Activated CD4-positive, alpha-beta T cell treated with anti-CD3 and anti-CD28 coated beads, Interleukin-2, amount 10 ng/mL, durations not matched to agents 24 days and 14 days (primary cell): ENCODE measurements at regions of chr6 and their contacts with region 1.

Region 1: GRCh38 chr6:75208298-75209183 is 2.7 kb upstream of the COL12A1 start:
- DNase-seq: peak; percentile 95
- H3K4me3 Mint-ChIP-seq: peak overlapping the region; percentile 83
- H3K27ac Mint-ChIP-seq: peak overlapping the region; percentile 66
- H3K4me1 Mint-ChIP-seq: peaks cover 51% of the 10 kb centered on the region
- H3K27me3 Mint-ChIP-seq: peaks cover 70% of the 10 kb centered on the region

Region 2: DNA sequence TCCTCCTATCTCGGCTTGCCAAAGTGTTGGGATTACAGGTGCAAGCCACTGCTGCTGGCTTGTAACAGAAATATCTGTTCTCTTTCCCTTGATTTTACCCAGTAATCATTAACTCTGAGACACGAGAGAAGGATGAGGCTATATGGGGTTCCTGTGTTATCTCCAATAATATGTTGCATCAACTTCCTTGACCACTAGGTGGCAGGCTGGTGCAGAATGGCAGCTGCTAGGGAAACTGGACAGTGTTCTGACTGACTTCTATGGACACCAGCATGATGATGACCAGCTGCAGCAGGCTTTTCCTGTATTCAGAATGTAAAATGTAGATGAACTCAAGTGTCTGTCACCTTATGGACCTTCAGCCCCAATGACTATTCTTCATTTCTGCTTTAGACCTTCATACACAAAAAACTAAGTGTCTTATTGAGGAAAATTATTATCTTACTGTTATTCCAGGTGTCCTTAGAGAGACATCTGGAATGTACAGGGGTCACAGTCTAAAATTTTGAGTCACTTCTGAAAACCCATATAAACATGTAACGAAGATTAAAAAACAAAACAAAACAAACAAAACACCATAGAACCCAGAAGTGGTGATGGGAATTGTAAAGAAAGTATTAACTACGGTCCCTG is 1533.0 kb before region 1 on chr6:
- intact Hi-C with region 1: loop called (anchors 5 kb)
- DNase-seq: peak; percentile 93
- H3K4me3 Mint-ChIP-seq: no peak overlapping the region
- H3K27ac Mint-ChIP-seq: no peak overlapping the region
- H3K4me1 Mint-ChIP-seq: no peaks in the 10 kb centered on the region
- H3K27me3 Mint-ChIP-seq: peaks cover 18% of the 10 kb centered on the region

Region 3: GRCh38 chr6:73854998-73855718 is 1353.4 kb before region 1 on chr6:
- intact Hi-C with region 1: loop called (anchors 1 kb)
- DNase-seq: peak; percentile 77
- H3K4me3 Mint-ChIP-seq: no peak overlapping the region
- H3K27ac Mint-ChIP-seq: no peak overlapping the region
- H3K4me1 Mint-ChIP-seq: no peaks in the 10 kb centered on the region
- H3K27me3 Mint-ChIP-seq: no peaks in the 10 kb centered on the region

Region 4: DNA sequence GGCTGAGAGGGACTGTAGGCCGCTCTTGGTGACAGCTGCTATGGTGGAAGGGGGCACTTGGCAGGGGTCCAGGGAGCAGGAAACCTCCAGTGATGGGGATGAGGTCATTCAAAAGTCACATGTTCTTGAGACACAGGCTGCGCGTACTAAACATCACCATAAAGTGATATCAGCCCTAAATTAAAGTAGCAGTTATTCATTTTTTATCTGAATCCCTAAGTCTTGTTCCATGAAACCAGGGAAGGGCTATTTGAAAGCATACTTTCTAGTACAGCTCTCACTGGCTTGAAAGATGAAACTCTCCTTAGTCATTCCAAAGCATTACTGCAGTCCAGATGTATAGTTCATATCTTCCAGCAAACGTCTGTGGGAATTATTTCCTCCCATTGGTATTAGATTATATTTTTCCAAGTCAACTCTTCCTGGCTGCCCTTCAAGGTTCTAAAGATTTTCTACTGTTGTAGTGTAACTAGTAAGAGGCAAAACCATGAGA is 1139.4 kb before region 1 on chr6:
- intact Hi-C with region 1: no loop called
- DNase-seq: no peak
- H3K4me3 Mint-ChIP-seq: no peak overlapping the region
- H3K27ac Mint-ChIP-seq: no peak overlapping the region
- H3K4me1 Mint-ChIP-seq: no peaks in the 10 kb centered on the region
- H3K27me3 Mint-ChIP-seq: peaks cover 10% of the 10 kb centered on the region

Region 5: GRCh38 chr6:74091136-74091793 is 1117.3 kb before region 1 on chr6:
- intact Hi-C with region 1: loop called (anchors 1 kb)
- DNase-seq: no peak
- H3K4me3 Mint-ChIP-seq: no peak overlapping the region
- H3K27ac Mint-ChIP-seq: no peak overlapping the region
- H3K4me1 Mint-ChIP-seq: no peaks in the 10 kb centered on the region
- H3K27me3 Mint-ChIP-seq: peaks cover 3% of the 10 kb centered on the region

Region 6: GRCh38 chr6:74912234-74912633 is 296.3 kb before region 1 on chr6:
- intact Hi-C with region 1: loop called (anchors 10 kb)
- DNase-seq: no peak
- H3K4me3 Mint-ChIP-seq: no peak overlapping the region
- H3K27ac Mint-ChIP-seq: no peak overlapping the region
- H3K4me1 Mint-ChIP-seq: no peaks in the 10 kb centered on the region
- H3K27me3 Mint-ChIP-seq: no peaks in the 10 kb centered on the region

Region 7: GRCh38 chr6:75526502-75527127 is 318.1 kb after region 1 on chr6:
- intact Hi-C with region 1: loop called (anchors 1 kb)
- DNase-seq: peak; percentile 87
- H3K4me3 Mint-ChIP-seq: no peak overlapping the region
- H3K27ac Mint-ChIP-seq: no peak overlapping the region
- H3K4me1 Mint-ChIP-seq: no peaks in the 10 kb centered on the region
- H3K27me3 Mint-ChIP-seq: peaks cover 31% of the 10 kb centered on the region